ENCODE measurements at regions of chr12 and their contacts with region 1.

Region 1: DNA sequence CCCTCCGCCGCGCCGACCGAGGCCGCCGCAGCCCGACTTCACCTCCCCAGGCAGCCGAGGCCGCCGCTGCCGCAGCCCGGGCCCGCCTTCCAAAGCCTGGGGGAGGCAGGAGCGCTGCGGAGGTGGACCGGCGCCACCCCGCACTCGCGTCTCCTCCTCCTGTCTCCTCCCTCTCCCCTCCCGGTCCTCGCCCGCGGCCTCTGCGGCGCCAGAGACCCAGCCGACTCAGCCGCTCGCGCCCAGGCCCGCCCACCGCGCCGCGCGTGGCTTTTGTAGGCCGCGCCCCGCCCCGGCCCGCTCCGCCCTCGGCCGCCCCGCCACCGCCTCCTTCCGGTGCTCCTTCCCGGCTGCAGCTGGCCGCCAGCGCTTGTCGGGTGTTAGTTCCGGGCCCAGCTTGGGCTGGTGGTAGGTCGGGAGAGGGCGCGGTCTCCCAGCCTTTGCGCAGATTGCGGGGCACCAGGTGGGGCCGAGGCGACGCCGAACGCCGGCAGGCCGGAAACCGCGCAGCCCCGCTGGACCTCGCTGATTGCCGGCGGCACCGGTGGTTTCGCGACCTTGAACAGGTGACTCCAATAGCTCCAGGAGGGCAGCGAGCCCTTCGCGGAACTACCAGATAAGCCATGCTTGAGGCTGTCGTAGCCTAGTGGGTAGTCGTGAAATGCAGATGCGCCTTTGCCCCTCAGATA is at the start of gene CAPRIN2:
- DNase-seq: peak; percentile 98
- ATAC-seq: peak; percentile 96 to 98 (median 98)
- H3K4me3 ChIP-seq: peak within 1 kb of the TSS; percentile 78
- H3K27ac ChIP-seq: peak within 1 kb of the TSS; percentile 89
- H3K4me1 ChIP-seq: peaks cover 9% of the 10 kb centered on the region
- H3K27me3 ChIP-seq: no peaks in the 10 kb centered on the region
- CTCF ChIP-seq: peak; percentile 47
- total RNA-seq, gene CAPRIN2: 9.0 to 17.7 (median 14.2) TPM

Region 2: GRCh38 chr12:30695199-30696103 is 59.4 kb before region 1 on chr12 and contains the start of gene IPO8:
- intact Hi-C with region 1: loop called (anchors 2 to 5 kb)
- DNase-seq: peak; percentile 94 to 96
- ATAC-seq: peak; percentile 89 to 94 (median 93)
- H3K4me3 ChIP-seq: peak within 1 kb of the TSS; percentile 88
- H3K27ac ChIP-seq: peak within 1 kb of the TSS; percentile 84
- H3K4me1 ChIP-seq: peaks cover 43% of the 10 kb centered on the region
- H3K27me3 ChIP-seq: no peaks in the 10 kb centered on the region
- CTCF ChIP-seq: peak; percentile 26
- total RNA-seq, gene IPO8: 22.8 to 37.2 (median 28.9) TPM

Region 3: GRCh38 chr12:30795410-30796312 is 40.8 kb after region 1 on chr12:
- intact Hi-C with region 1: loop called in 1 of 2 experiments (anchors 1 kb)
- DNase-seq: peak; percentile 72 to 73
- ATAC-seq: peak; percentile 69 to 82 (median 76)
- H3K4me3 ChIP-seq: peak overlapping the region; percentile 88
- H3K27ac ChIP-seq: peak overlapping the region; percentile 80
- H3K4me1 ChIP-seq: peaks cover 10% of the 10 kb centered on the region
- H3K27me3 ChIP-seq: no peaks in the 10 kb centered on the region
- CTCF ChIP-seq: peak; percentile 24

Region 4: GRCh38 chr12:30806989-30807694 is 52.3 kb after region 1 on chr12:
- intact Hi-C with region 1: loop called in 1 of 2 experiments (anchors 2 kb)
- DNase-seq: no peak
- ATAC-seq: peak; percentile 82 to 97 (median 88)
- H3K4me3 ChIP-seq: peak overlapping the region; percentile 4
- H3K27ac ChIP-seq: no peak overlapping the region
- H3K4me1 ChIP-seq: no peaks in the 10 kb centered on the region
- H3K27me3 ChIP-seq: no peaks in the 10 kb centered on the region
- CTCF ChIP-seq: peak; percentile 79